GM10248 (cell line): ENCODE measurements at regions of chr17 and their contacts with region 1.

Region 1: GRCh38 chr17:3845621-3846441 is at the start of gene NCBP3:
- DNase-seq: peak; percentile 98
- CTCF ChIP-seq: peak; percentile 94

Region 2: DNA sequence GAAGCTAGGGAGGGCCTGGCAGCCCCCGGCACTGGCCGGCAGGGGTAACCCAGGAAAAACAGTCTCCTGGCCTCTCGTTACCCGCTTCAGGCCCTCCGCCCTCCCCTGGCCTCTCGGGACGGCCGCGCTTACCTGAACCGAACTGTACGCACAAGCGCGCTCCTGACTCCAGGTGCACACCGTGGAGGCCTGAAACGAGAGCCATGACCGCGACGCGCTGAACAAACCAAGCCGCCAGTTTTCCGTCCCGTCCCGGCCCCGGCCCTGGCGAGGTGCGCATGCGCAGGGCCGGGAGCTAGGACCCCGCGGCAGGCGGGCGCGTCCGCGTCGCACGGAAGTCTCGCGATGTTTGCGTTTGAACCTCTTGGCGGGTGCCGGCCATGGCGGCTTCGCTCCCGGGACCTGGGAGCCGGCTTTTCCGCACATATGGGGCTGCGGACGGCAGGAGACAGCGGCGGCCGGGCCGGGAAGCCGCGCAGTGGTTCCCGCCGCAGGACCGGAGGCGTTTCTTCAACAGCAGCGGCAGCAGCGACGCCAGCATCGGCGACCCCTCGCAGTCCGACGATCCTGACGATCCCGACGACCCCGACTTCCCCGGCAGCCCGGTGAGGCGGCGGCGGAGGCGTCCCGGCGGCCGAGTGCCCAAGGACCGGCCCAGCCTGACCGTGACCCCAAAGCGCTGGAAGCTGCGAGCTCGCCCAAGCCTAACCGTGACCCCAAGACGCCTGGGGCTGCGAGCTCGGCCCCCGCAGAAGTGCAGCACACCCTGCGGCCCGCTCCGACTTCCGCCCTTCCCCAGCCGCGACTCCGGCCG is 122.1 kb before region 1 on chr17 and contains the start of gene HASPIN:
- CTCF ChIA-PET with region 1: interaction called, 10 read pairs
- POLR2A ChIA-PET with region 1: interaction called, 4 read pairs
- DNase-seq: peak; percentile 99
- CTCF ChIP-seq: no peak

Region 3: DNA sequence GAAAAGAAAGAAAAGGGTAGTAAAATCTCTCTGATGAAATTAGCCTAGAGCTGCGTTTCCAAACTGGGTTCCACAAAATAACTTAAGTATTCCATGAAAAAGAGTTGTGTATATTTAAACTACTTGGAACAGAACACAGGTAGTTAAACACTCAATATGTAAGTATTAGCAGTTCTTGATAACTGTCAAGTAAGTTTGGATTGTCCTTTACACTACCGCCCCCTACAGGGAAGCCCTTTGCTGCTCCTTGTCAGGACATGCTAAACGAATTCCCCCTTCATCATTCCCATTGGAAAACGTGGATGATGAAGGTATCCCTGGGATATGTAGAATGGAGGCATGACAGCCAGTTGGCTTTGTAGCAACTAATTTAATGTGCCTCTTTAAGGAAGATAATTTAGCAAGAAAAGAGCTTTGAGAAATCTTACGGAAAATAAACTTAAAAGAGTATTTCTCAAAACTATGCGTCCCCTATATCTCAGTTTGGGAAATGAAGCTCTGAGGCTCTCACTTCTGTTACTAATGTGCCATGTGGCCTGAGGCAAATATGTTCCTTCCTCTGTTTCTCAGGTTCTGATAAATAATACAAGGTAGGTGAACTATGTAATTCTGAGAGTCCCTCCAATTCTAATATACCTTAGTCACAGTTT is 18.6 kb before region 1 on chr17:
- CTCF ChIA-PET with region 1: interaction called, 61 read pairs
- POLR2A ChIA-PET with region 1: no interaction called
- DNase-seq: peak; percentile 65
- CTCF ChIP-seq: peak; percentile 68

Region 4: DNA sequence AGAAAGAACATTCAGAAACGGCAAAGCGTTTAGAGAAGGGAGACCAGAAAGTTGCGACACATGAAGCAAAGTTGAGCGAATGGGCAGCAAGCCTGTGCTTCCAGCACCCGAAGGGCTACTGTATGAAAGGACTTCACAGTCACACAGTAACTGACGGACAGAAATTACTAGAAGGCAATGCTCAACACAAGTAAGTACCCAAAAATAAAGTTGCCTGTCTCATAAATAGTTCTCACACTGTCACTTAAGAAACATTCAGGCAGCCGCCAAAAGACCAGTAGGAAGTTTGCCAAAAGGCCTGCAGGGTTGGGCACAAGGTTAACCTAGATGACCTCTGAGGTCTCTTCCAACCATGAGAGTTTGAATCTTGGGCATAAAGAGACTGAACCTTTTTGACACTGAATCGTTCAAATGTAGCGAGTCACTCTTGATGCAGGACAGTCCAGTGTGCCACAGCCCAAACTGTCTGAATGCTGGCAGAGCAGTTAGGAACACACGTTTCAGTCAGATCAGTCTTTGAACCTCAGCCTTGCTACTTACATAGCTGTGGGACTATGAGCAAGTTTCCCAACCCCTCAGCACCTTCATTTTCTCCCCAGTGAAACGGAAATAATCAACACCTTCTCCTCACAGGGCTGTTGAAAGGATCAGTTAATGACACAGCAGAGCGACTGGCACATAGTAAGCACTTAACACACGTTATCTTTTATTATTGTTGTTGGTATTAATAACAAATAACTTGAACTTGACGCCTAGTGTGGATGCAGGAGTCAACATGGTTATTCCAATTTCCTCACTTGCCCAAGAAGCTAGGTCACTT is 10.2 kb before region 1 on chr17:
- CTCF ChIA-PET with region 1: interaction called, 29 read pairs
- POLR2A ChIA-PET with region 1: no interaction called
- DNase-seq: no peak
- CTCF ChIP-seq: no peak

Region 5: GRCh38 chr17:3865176-3865575 is 19.3 kb after region 1 on chr17:
- CTCF ChIA-PET with region 1: interaction called, 73 read pairs
- POLR2A ChIA-PET with region 1: no interaction called
- DNase-seq: no peak
- CTCF ChIP-seq: no peak

Region 6: DNA sequence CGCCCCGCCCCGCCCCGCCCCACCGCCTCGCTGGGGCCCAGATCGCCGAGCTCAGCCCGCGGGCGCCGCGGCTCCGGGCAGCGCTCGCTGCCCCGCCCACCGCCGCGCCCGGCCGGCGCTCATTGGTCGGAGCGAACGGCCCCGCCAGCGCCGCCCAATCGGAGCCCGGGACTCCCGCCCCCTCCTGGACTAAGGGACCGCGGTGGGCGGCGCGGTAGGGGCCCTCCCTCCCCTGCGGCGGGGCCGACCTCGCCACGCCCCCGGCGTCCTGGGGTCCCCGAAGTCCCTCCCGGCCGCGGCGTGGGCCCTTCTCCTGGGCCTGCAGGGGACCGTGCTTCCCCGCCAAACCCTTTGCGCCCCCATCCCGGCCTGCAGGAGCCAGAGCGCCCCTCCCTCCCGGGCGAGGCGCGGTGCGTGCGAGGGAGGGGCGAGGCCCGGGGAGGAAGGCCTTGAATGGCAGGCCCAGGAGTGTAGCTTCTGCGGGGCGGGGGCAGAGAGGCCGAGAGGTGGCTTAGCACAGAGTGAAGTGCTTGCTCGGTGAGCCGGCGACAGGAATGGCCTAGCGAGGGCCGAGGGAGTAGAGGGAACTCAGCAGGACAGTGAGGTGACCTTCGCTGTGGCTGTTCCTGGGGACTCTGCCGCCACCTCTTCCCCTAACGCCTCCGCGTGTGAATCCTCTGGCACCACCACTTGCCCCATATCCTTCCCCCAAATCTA is 47.3 kb after region 1 on chr17 and contains the start of gene CAMKK1:
- CTCF ChIA-PET with region 1: interaction called, 13 read pairs
- POLR2A ChIA-PET with region 1: no interaction called
- DNase-seq: peak; percentile 99
- CTCF ChIP-seq: no peak

Region 7: DNA sequence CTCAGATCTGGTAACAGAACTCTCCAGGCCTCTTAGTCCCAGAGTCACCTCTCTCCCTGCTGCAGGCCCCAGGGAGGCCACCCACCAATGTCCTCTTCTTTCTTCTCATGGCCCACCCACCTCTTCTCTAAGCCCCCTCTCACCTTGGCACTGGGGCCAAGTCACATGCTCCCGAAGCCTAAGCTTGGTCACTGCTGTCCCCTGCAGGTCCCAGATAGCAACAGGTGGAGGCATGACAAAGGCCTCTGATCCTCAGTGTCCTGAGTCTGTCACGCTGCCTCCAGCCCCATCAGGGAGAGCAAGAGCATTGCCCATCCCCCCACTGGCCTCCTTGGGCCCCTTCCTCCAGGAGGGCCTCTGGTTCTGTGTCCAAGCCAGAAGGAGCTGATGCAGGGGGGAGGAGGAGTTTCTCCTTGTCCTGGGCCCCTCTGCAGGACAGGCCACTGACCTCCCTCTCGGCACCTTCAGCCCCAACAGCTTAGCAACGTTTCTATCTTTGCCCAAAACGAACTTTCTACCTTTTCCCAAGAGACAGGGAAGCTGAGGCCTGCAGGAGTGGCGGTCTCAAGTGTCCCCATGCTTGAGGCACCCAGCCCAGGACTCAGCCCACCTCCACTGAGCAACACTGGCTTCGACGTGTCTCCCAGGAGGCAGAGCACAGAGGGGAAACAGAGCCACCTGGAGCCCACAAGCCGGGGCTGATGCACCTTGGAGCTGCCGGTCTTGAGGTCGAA is 61.8 kb after region 1 on chr17:
- CTCF ChIA-PET with region 1: interaction called, 36 read pairs
- POLR2A ChIA-PET with region 1: interaction called, 3 read pairs
- DNase-seq: no peak
- CTCF ChIP-seq: peak; percentile 64

Region 8: DNA sequence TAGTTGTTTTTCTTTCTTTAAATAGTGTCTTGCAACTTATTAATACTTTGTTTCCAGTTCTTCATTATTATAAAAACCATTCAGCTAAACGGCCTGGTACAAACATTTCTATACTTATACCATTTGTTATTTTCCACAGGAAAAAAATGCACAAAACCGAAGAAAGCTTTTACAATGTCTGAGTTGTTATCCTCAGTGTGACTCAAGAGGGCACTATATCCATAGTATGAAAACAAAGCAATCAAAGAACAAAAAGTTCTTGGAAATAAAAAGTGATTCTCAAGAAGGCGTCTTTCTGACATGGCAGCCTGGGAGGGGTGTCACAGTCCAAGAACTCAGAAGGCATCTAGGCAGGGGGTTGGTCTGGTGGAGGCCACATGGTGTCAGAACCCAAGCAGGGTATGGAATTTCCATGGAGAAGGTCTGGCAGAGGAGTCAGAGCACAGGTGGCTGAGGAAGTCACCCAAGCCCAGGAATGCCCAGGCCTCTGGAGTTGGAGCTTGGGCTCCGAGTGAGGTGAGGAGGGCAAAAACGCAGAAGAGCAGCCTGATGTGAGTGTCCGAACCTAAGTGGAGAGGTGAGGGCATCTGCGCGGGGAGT is 189.3 kb after region 1 on chr17:
- CTCF ChIA-PET with region 1: no interaction called
- POLR2A ChIA-PET with region 1: no interaction called
- DNase-seq: no peak
- CTCF ChIP-seq: no peak